ENCODE measurements at regions of chr1 and their contacts with region 1.

Region 1: GRCh38 chr1:29033829-29034466 is 89.8 kb downstream of the TMEM200B start:
- DNase-seq: peak; percentile 75
- H3K4me3 ChIP-seq: no peak overlapping the region
- H3K27ac ChIP-seq: no peak overlapping the region
- H3K4me1 ChIP-seq: peaks cover 4% of the 10 kb centered on the region
- H3K27me3 ChIP-seq: no peaks in the 10 kb centered on the region
- CTCF ChIP-seq: peak; percentile 28 to 31
- POLR2A ChIP-seq: no peak

Region 2: DNA sequence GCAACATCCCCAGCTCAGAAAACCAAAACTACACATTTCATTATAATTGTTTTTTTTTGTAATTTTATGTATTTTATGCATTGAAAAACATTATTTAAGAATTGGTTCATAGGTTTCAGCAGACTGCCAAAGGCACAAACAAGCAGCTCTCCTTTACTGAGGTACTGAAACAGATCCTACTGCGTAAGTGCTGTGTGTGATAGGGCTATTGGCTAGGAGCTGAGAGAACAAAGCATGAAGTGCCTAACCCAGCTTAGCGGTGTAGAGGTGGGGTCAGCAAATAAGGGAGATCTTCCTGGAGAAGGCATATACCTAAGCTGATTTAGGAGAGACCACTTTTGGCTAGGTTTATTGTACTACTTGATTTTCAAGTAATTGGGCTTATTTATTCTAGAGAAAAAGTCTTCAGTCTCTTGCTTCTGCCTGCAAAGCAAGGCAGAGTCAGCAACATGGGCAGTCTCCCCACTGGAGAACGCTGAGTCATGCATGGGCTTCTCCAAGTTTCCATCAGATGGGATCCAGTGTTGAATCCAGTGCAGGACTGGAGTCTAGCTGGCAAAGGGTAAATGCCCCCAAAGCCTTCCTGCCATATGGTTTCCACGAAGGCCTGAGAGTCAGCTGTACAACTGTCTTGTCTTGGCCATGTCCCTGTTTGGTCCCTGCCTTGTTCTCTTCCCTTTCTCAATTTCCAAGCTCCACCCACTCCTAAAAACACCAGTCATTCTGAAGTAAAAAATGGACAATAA is 315.2 kb before region 1 on chr1:
- CTCF ChIA-PET with region 1: no interaction called
- POLR2A ChIA-PET with region 1: interaction called, 11 read pairs
- dilution Hi-C with region 1: no loop called
- intact Hi-C with region 1: no loop called
- DNase-seq: peak; percentile 10
- H3K4me3 ChIP-seq: no peak overlapping the region
- H3K27ac ChIP-seq: no peak overlapping the region
- H3K4me1 ChIP-seq: no peaks in the 10 kb centered on the region
- H3K27me3 ChIP-seq: no peaks in the 10 kb centered on the region
- CTCF ChIP-seq: no peak
- POLR2A ChIP-seq: no peak

Region 3: DNA sequence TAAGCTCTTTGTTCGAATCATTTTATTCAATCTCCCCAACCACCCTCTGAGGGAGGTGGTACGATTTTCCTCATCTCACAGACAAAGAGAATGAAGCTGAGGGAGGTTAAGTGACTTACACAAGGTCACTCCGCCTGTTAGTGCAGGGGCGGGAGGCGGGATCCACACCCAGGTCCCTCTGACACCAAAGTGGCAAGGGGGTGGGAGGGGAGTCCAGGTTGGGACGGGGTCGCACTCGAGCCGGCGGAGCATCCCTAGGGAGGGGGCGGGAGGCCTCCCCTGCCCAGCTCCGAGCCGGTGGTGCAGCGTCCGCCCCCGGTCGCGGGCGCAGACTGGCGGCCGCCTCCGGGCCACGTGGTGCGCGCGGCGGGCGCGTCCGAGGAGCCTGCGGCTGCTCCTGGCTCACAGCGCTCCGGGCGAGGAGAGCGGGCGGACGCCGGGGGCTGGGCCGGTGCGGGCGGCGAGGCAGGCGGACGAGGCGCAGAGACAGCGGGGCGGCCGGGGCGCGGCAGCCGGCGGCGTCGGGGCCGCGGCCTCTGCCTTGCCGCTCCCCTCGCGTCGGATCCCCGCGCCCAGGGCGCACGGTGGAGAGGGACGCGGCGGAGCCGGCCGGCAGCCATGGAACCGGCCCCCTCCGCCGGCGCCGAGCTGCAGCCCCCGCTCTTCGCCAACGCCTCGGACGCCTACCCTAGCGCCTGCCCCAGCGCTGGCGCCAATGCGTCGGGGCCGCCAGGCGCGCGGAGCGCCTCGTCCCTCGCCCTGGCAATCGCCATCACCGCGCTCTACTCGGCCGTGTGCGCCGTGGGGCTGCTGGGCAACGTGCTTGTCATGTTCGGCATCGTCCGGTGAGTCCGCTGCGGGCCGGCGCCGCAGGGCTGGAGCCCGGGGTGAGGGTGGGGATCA is 221.9 kb before region 1 on chr1 and contains the start of gene OPRD1:
- CTCF ChIA-PET with region 1: no interaction called
- POLR2A ChIA-PET with region 1: no interaction called
- dilution Hi-C with region 1: no loop called
- intact Hi-C with region 1: no loop called
- DNase-seq: no peak
- H3K4me3 ChIP-seq: no peak within 1 kb of the TSS
- H3K27ac ChIP-seq: no peak within 1 kb of the TSS
- H3K4me1 ChIP-seq: no peaks in the 10 kb centered on the region
- H3K27me3 ChIP-seq: peaks cover 36 to 44% of the 10 kb centered on the region in 2 experiments
- CTCF ChIP-seq: no peak
- POLR2A ChIP-seq: no peak
- total RNA-seq, gene OPRD1: not detected in 2 replicates

Region 4: GRCh38 chr1:28893403-28894102 is 140.4 kb before region 1 on chr1:
- CTCF ChIA-PET with region 1: interaction called, 33 read pairs
- POLR2A ChIA-PET with region 1: no interaction called
- dilution Hi-C with region 1: no loop called
- intact Hi-C with region 1: loop called (anchors 1 kb)
- DNase-seq: no peak
- H3K4me3 ChIP-seq: no peak overlapping the region
- H3K27ac ChIP-seq: no peak overlapping the region
- H3K4me1 ChIP-seq: peaks cover 7% of the 10 kb centered on the region
- H3K27me3 ChIP-seq: no peaks in the 10 kb centered on the region
- CTCF ChIP-seq: peak in 1 of 2 donors; percentile 27
- POLR2A ChIP-seq: no peak

Region 5: DNA sequence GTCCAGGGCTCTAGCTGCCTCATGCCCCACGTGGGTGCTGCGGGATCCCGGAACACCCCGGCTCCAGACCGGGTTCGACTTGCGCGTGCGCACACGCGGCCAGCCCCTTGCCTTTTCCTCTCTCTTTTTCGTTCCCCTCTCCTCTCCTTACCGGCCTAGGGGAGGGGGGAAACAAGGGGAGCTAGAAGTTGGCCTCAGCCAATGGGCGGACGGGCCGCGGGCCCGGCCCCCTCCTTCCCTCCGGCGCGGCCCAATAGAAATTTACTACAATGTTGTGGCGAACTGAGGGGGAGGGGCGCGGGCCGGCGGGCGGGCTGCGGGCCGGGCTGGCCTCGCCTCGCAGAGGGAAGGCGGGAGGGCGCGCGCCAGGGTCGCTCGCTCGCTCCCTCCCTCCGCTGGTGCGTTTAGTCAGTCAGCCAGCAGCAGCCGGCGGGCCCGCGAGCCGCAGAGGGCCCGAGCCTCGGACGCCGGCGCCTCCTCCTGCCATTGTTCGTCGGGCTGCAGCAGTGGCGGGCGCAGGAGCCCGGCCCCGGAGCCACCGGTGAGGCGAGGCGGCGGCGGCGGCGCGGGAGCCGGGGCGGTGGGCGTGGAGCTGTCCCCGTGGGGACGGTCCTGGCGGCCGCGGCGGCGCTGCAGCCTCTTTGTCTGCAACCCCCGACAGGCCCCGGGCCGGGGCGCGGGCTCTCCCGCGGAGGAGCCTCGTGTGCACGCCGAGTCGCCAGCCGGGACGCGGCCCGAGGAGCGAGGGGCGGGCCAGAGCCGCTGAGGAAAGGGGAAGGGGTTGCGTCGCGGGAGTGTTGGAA is 119.5 kb before region 1 on chr1 and contains the start of gene EPB41:
- CTCF ChIA-PET with region 1: interaction called, 27 read pairs
- POLR2A ChIA-PET with region 1: no interaction called
- dilution Hi-C with region 1: no loop called
- intact Hi-C with region 1: no loop called
- DNase-seq: peak; percentile 95
- H3K4me3 ChIP-seq: peak within 1 kb of the TSS; percentile 39 to 54 (median 52)
- H3K27ac ChIP-seq: peak within 1 kb of the TSS; percentile 9
- H3K4me1 ChIP-seq: peaks cover 10% of the 10 kb centered on the region
- H3K27me3 ChIP-seq: no peaks in the 10 kb centered on the region
- CTCF ChIP-seq: no peak
- POLR2A ChIP-seq: no peak
- total RNA-seq, gene EPB41: 39.7 and 45.7 TPM in 2 replicates

Region 6: DNA sequence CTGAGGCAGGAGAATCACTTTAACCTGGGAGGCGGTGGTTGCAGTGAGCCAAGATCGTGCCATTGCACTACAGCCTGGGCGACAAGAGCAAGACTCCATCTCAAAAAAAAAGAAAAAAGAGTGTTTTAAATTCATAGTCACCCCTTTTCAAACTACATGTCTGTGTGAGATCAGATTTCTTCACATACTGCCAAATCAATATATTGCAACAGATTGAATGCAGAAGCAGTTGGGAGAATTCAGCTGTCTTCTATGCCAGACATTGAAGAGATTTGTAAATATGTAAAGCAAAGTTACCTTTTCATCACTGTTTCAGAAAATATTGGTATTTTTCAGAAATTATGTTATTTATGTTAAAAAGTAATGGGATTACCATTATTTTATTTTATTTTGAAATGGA is 11.3 kb before region 1 on chr1:
- CTCF ChIA-PET with region 1: interaction called, 11 read pairs
- POLR2A ChIA-PET with region 1: no interaction called
- dilution Hi-C with region 1: no loop called
- intact Hi-C with region 1: no loop called
- DNase-seq: no peak
- H3K4me3 ChIP-seq: no peak overlapping the region
- H3K27ac ChIP-seq: no peak overlapping the region
- H3K4me1 ChIP-seq: no peaks in the 10 kb centered on the region
- H3K27me3 ChIP-seq: no peaks in the 10 kb centered on the region
- CTCF ChIP-seq: no peak
- POLR2A ChIP-seq: no peak

Region 7: DNA sequence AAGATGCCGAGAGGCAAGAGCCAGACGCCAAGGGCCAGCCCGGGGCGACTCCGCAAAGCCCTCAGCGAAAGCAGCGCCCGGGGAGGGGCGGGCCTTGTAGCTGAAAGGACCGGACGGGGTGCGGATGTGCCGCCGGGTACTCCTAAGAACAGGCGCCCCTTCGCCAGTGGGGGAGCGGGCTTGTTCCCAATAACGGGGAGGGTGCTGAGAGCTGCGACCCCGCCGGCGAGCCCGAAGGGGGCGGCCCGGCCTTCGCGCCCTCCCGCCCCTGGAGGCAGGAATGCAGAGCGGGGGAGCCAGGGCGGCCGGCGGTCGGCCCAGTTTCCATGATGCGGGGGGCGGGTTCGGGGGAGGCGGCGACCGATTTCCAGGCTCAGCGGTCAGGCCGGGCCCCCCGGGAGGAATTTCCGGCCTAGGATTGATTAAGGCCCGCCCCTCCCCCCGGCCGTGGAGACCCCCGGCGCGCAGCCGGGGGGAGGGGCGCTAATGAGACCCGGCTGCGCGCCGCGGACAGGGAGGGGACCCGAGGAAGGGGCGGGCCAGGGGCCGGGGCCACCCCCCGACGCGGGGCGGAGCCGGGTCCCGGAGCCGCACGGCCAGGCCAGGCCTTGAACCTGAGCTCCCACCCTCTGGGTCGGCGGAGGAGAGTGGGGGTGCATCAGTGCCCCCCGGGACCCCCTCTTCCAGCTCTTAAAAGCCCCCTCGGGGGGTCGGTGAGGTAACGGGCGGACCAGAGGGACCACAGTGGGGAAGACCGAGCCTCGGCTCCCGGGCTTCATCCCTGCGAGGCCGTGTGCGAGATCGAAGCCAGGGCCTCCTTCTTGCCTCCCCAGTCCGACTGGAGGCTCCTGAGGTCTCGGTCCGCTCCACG is 90.7 kb after region 1 on chr1:
- CTCF ChIA-PET with region 1: no interaction called
- POLR2A ChIA-PET with region 1: no interaction called
- dilution Hi-C with region 1: no loop called
- intact Hi-C with region 1: loop called (anchors 5 kb)
- DNase-seq: peak; percentile 72
- H3K4me3 ChIP-seq: peak overlapping the region; percentile 33 to 52 (median 42)
- H3K27ac ChIP-seq: peak overlapping the region; percentile 46
- H3K4me1 ChIP-seq: peaks cover 23% of the 10 kb centered on the region
- H3K27me3 ChIP-seq: peaks cover 0 to 14% of the 10 kb centered on the region in 2 experiments
- CTCF ChIP-seq: peak; percentile 55 to 72
- POLR2A ChIP-seq: peak; percentile 26

Region 8: DNA sequence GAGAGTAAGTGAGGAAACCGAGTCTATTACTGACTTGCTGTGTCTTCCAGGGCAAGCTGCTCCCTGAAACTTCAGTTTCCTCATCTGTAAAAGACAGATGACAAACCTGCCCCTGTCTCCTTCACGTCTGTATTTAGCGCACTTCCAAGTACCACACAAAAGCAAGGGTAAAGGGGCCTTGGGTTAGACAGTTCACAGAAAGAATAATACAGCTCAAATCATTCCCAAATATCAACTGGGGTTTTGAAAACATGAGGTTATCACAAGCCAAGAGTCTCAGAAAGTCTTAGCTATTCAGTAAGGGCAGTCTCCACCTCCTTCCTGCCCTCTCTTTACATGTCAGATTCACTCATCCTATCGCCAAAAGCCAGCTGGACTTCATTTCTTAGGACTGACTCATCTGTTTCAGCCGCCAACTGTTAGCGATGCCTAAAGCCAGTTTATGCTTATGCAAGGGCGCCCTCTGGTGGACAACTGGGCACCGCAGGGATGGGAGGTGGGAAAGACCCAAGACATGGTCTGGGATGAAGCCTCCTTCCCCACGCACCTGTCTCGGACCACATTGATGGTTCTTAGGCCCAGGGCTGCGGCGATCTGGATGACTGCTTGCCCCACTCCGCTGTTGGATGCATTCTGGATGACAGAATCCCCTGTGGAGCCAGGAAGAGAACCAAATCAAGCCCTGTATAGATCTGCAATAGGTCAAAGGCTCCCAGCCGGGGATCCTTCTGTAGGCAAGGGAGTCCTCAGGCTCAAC is 168.8 kb after region 1 on chr1:
- CTCF ChIA-PET with region 1: interaction called, 37 read pairs
- POLR2A ChIA-PET with region 1: no interaction called
- dilution Hi-C with region 1: no loop called
- intact Hi-C with region 1: loop called (anchors 1 kb)
- DNase-seq: peak; percentile 96
- H3K4me3 ChIP-seq: no peak overlapping the region
- H3K27ac ChIP-seq: peak overlapping the region; percentile 63
- H3K4me1 ChIP-seq: peaks cover 10% of the 10 kb centered on the region
- H3K27me3 ChIP-seq: no peaks in the 10 kb centered on the region
- CTCF ChIP-seq: peak; percentile 89 to 97
- POLR2A ChIP-seq: no peak